Activated CD8-positive, alpha-beta T cell treated with anti-CD3 and anti-CD28 coated beads for 36 hours (primary cell): ENCODE measurements at regions of chr2 and their contacts with region 1.

Region 1: GRCh38 chr2:65169760-65170136 is 39.8 kb upstream of the RAB1A start:
- DNase-seq: no peak
- ATAC-seq: no peak
- H3K4me3 Mint-ChIP-seq: no peak overlapping the region
- H3K27ac Mint-ChIP-seq: no peak overlapping the region
- H3K4me1 Mint-ChIP-seq: peaks cover 2% of the 10 kb centered on the region
- H3K27me3 Mint-ChIP-seq: no peaks in the 10 kb centered on the region
- CTCF ChIP-seq: no peak

Region 2: GRCh38 chr2:65056215-65057053 is 113.3 kb before region 1 on chr2 and contains the start of gene CEP68:
- CTCF ChIA-PET with region 1: interaction called, 14 read pairs
- POLR2A ChIA-PET with region 1: no interaction called
- intact Hi-C with region 1: no loop called
- DNase-seq: peak; percentile 98
- ATAC-seq: peak; percentile 94
- H3K4me3 Mint-ChIP-seq: peak within 1 kb of the TSS; percentile 92
- H3K27ac Mint-ChIP-seq: peak within 1 kb of the TSS; percentile 84
- H3K4me1 Mint-ChIP-seq: peaks cover 49% of the 10 kb centered on the region
- H3K27me3 Mint-ChIP-seq: no peaks in the 10 kb centered on the region
- CTCF ChIP-seq: no peak
- total RNA-seq, gene CEP68: 6.0 to 6.3 TPM

Region 3: DNA sequence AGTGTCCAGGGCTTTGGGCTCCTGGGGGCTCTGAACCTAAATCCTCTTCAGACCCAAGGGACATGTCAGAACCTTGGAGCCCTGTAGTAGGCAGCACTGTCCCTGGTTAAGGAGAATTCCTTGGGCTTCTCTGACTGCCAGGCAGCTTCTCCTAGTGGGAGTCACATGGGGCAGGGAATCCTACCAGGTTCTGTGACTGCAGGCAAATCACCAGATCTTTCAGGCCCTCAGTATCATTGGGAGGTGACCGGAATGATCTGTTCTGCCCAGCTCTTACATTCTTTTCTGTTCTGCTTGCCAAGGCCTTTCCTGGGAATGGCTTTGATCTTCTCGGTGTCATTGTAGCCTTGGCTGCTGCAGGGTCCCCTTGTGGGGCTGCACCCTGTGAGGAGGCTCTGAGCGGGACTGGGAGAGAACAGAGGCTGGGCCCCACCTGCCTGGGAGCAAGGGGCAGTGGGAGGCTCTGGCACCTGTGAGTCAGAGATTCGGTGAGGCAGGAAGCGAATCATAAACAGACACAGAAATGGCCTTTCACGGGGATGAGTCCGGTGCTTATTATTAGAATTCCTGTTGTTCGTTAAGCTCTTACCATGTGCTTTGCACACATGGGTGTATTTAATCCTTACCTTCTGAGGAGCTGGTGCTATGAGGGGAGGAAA is 99.4 kb before region 1 on chr2:
- CTCF ChIA-PET with region 1: interaction called, 105 read pairs
- POLR2A ChIA-PET with region 1: no interaction called
- intact Hi-C with region 1: loop called (anchors 5 kb)
- DNase-seq: peak; percentile 48
- ATAC-seq: peak; percentile 60
- H3K4me3 Mint-ChIP-seq: no peak overlapping the region
- H3K27ac Mint-ChIP-seq: peak overlapping the region; percentile 89
- H3K4me1 Mint-ChIP-seq: peaks cover 34% of the 10 kb centered on the region
- H3K27me3 Mint-ChIP-seq: no peaks in the 10 kb centered on the region
- CTCF ChIP-seq: no peak

Region 4: DNA sequence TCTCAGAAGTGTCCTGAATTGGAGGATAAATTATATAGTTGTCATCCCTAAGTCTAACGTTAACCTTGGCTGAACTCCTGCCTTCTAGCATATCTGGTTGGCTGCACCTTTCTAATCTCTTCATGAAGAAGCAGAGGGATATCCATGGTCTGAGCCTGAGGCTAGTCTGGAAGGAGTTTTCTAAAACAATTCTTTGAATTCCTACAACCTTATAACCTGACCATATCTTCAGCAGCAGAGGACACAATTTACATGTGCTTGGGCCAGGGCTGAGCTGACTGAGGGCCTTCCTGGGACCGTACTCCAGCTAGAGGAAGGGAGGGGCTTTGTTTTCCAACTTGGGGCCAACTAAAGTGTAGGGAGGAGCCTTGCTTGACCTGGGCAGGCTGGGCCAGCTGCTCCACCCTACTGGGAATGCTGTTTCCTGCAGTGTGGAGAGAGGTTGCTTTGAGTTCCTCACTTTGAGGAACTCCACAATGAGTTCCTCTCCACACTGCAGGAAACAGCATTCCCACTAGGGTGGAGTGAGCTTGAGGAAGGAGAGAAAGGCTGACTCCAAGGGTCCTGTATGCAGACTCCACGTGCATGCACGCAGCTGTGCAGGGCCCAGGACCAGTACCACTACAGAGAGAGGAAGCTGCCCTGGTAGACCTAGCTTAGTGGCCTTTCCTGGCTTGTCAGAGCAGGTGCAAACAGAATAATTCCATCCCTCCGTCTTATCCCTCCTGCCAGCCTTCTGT is 94.0 kb before region 1 on chr2:
- CTCF ChIA-PET with region 1: interaction called, 16 read pairs
- POLR2A ChIA-PET with region 1: no interaction called
- intact Hi-C with region 1: no loop called
- DNase-seq: no peak
- ATAC-seq: no peak
- H3K4me3 Mint-ChIP-seq: no peak overlapping the region
- H3K27ac Mint-ChIP-seq: no peak overlapping the region
- H3K4me1 Mint-ChIP-seq: peaks cover 3% of the 10 kb centered on the region
- H3K27me3 Mint-ChIP-seq: no peaks in the 10 kb centered on the region
- CTCF ChIP-seq: no peak

Region 5: DNA sequence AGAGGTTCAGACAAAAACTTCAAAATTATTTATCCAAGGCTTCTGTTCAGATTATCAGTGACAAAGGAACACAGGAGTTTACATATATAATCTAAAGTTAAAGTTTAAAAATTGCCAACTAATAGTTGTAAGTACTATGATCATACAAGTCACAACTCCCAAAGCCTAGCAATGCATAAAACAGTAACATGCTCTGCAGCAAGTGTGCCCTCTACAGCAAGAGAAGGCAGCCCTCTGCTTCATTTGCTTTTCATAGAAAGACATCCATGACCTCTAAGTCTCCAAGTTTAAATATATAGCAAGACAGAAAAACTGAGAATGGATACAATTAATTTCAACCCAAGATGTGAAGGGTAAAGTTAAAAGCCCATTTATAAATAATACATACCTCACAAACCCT is 53.1 kb before region 1 on chr2:
- CTCF ChIA-PET with region 1: interaction called, 11 read pairs
- POLR2A ChIA-PET with region 1: no interaction called
- intact Hi-C with region 1: no loop called
- DNase-seq: no peak
- ATAC-seq: no peak
- H3K4me3 Mint-ChIP-seq: no peak overlapping the region
- H3K27ac Mint-ChIP-seq: no peak overlapping the region
- H3K4me1 Mint-ChIP-seq: peaks cover 49% of the 10 kb centered on the region
- H3K27me3 Mint-ChIP-seq: no peaks in the 10 kb centered on the region
- CTCF ChIP-seq: no peak

Region 6: GRCh38 chr2:65186872-65187851 is 17.4 kb after region 1 on chr2:
- CTCF ChIA-PET with region 1: interaction called, 22 read pairs
- POLR2A ChIA-PET with region 1: interaction called, 3 read pairs
- intact Hi-C with region 1: no loop called
- DNase-seq: peak; percentile 75
- ATAC-seq: peak; percentile 90
- H3K4me3 Mint-ChIP-seq: no peak overlapping the region
- H3K27ac Mint-ChIP-seq: no peak overlapping the region
- H3K4me1 Mint-ChIP-seq: peaks cover 4% of the 10 kb centered on the region
- H3K27me3 Mint-ChIP-seq: no peaks in the 10 kb centered on the region
- CTCF ChIP-seq: peak; percentile 74